ENCODE measurements at regions of chr6 and their contacts with region 1.

Region 1: GRCh38 chr6:56486681-56487080 is 156.0 kb downstream of the DST start:
- DNase-seq: no peak
- H3K4me3 ChIP-seq: no peak overlapping the region
- H3K27ac ChIP-seq: peak overlapping the region; percentile 22 to 77; a peak in 1 of 4 replicates
- H3K4me1 ChIP-seq: peaks cover 12% of the 10 kb centered on the region in 2 experiments
- H3K27me3 ChIP-seq: no peaks in the 10 kb centered on the region
- CTCF ChIP-seq: no peak
- EP300 ChIP-seq: no peak
- RAD21 ChIP-seq: no peak

Region 2: GRCh38 chr6:56499095-56499494 is 12.4 kb after region 1 on chr6:
- CTCF ChIA-PET with region 1: no interaction called
- POLR2A ChIA-PET with region 1: no interaction called
- DNase-seq: no peak
- H3K4me3 ChIP-seq: no peak overlapping the region
- H3K27ac ChIP-seq: peak overlapping the region in 1 of 2 experiments; percentile 13; a peak in 2 of 4 replicates
- H3K4me1 ChIP-seq: no peaks in the 10 kb centered on the region; a peak in 2 of 4 replicates
- H3K27me3 ChIP-seq: no peaks in the 10 kb centered on the region
- CTCF ChIP-seq: no peak
- EP300 ChIP-seq: no peak
- RAD21 ChIP-seq: no peak

Region 3: GRCh38 chr6:56542364-56543331 is 56.0 kb after region 1 on chr6:
- CTCF ChIA-PET with region 1: interaction called, 11 read pairs
- POLR2A ChIA-PET with region 1: no interaction called
- DNase-seq: peak; percentile 74
- H3K4me3 ChIP-seq: peak overlapping the region; percentile 56 to 76
- H3K27ac ChIP-seq: peak overlapping the region; percentile 88 to 96
- H3K4me1 ChIP-seq: peaks cover 19 to 31% of the 10 kb centered on the region in 2 experiments; a peak in 3 of 4 replicates
- H3K27me3 ChIP-seq: no peaks in the 10 kb centered on the region
- CTCF ChIP-seq: no peak
- EP300 ChIP-seq: peak; percentile 4 to 24; a peak in 2 of 4 replicates
- RAD21 ChIP-seq: 0 out of 2 replicates have a peak, but pooled peaks have one; percentile 11

Measured in SK-N-SH (cell line).